Common myeloid progenitor, CD34-positive (primary cell): ENCODE measurements at regions of chr7 and their contacts with region 1.

Region 1: GRCh38 chr7:48109848-48110663 is 21.0 kb downstream of the UPP1 start:
- DNase-seq: peak; percentile 54 to 70 (median 58)
- H3K4me3 ChIP-seq: no peak overlapping the region
- H3K27ac ChIP-seq: no peak overlapping the region
- H3K4me1 ChIP-seq: no peaks in the 10 kb centered on the region
- H3K27me3 ChIP-seq: no peaks in the 10 kb centered on the region

Region 2: GRCh38 chr7:47945261-47946001 is 164.6 kb before region 1 on chr7:
- CTCF ChIA-PET with region 1: interaction called, 116 read pairs
- POLR2A ChIA-PET with region 1: interaction called, 3 read pairs
- DNase-seq: peak; percentile 51 to 78 (median 67)
- H3K4me3 ChIP-seq: no peak overlapping the region
- H3K27ac ChIP-seq: no peak overlapping the region
- H3K4me1 ChIP-seq: no peaks in the 10 kb centered on the region
- H3K27me3 ChIP-seq: no peaks in the 10 kb centered on the region

Region 3: GRCh38 chr7:47979145-47979831 is 130.8 kb before region 1 on chr7 and contains the start of gene HUS1:
- CTCF ChIA-PET with region 1: interaction called, 17 read pairs
- POLR2A ChIA-PET with region 1: no interaction called
- DNase-seq: peak; percentile 92 to 94 (median 94)
- H3K4me3 ChIP-seq: peak within 1 kb of the TSS; percentile 21 to 91 (median 82)
- H3K27ac ChIP-seq: peak within 1 kb of the TSS; percentile 54 to 76
- H3K4me1 ChIP-seq: peaks cover 4 to 16% (median 12%) of the 10 kb centered on the region in 4 experiments
- H3K27me3 ChIP-seq: no peaks in the 10 kb centered on the region

Region 4: DNA sequence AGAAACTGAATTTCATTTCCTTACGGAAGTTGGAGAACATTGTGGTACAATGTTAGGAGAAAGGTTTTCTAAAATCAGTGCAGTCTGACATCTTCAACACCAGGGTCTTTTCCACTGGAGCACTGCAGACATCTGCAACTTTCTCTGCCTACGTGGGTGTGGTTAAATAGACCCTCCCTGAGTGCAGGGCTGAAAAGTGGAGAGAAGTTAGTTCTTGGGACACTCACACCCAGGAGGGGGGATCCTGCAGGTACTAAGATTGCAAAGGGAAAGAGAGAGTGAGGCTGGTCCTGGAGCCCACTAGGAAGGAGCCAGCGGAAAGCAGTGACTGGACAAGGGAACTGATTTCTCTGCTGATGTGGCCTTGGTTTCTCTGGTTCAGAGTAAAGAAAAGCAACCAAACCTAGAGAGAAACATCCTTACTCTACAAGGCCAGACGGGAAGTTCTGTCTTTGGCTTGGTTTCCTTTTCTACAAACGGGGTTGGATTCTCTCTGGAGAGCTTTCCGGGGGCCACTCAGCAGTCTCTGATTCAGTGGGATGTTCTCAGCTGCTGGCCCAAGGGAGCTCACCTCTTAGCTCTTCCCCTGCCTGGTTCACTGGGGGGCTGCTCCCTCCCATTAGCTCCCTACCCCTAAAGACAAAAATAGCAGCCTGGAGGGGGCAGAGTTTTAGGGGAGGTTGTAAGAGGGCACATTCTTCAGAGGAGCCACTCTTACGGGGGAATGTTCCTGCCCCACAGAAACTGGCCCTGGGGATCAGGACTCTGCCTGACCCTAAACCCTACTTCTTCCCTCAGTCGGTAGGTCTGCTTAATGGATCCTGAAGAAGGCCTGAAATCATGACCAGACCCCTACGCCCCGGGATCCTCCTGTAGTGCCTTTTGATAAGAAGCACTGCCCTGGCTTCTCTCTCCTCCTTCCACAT is 18.3 kb before region 1 on chr7:
- CTCF ChIA-PET with region 1: interaction called, 10 read pairs
- POLR2A ChIA-PET with region 1: no interaction called
- DNase-seq: no peak
- H3K4me3 ChIP-seq: no peak overlapping the region
- H3K27ac ChIP-seq: no peak overlapping the region
- H3K4me1 ChIP-seq: peaks cover 5 to 31% (median 28%) of the 10 kb centered on the region in 4 experiments
- H3K27me3 ChIP-seq: peaks cover 0 to 4% (median 3%) of the 10 kb centered on the region in 5 experiments